ENCODE measurements at regions of chr1 and their contacts with region 1.

Region 1: GRCh38 chr1:33367485-33368405 is 46.8 kb upstream of the A3GALT2 start:
- DNase-seq: peak in 1 of 2 donors; percentile 92
- H3K4me3 ChIP-seq: peak overlapping the region in 1 of 2 donors; percentile 36
- H3K27ac ChIP-seq: peak overlapping the region; percentile 73 to 87
- H3K4me1 ChIP-seq: peaks cover 12 to 46% of the 10 kb centered on the region in 2 donors
- H3K27me3 ChIP-seq: no peaks in the 10 kb centered on the region
- CTCF ChIP-seq: peak; percentile 94 to 98 (median 96)

Region 2: GRCh38 chr1:33127001-33127791 is 240.5 kb before region 1 on chr1:
- intact Hi-C with region 1: loop called (anchors 5 kb)
- DNase-seq: peak; percentile 97 to 100
- H3K4me3 ChIP-seq: peak overlapping the region; percentile 63 to 79
- H3K27ac ChIP-seq: peak overlapping the region; percentile 86 to 88
- H3K4me1 ChIP-seq: peaks cover 7 to 15% of the 10 kb centered on the region in 2 donors
- H3K27me3 ChIP-seq: no peaks in the 10 kb centered on the region
- CTCF ChIP-seq: peak; percentile 85 to 89 (median 87)

Region 3: DNA sequence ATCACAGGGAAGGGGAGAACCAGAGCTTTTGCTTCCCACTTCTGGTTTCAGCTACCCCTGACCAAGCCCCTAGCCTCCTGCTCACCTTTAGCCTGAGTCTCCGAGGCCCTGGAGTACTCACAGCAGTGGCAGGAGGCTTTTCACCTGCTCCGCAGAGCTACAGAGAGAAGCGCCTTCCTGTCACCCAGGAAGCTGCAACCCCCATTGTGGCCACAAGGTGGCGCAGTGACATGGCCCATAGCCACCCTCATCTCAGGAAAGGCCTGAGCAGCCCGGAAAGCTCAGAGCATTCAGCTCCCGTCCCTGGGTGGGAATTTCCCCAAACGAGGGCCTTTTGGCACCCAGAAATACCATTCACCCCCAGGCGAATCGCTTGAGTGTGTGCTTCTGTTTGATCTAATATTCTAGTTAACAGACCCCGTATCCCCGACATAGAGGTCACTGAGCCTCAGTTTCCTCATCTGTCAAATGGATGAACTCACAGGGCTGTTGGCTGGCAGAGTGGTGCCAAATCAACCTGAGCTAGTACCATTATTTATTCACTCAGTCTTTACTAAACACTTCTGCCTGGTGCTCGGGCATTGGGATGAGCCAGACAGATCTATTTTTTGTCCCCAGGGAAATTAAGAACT is 72.2 kb before region 1 on chr1:
- intact Hi-C with region 1: loop called (anchors 1 kb)
- DNase-seq: peak; percentile 43 to 93
- H3K4me3 ChIP-seq: no peak overlapping the region
- H3K27ac ChIP-seq: peak overlapping the region; percentile 44 to 54
- H3K4me1 ChIP-seq: peaks cover 4 to 13% of the 10 kb centered on the region in 2 donors
- H3K27me3 ChIP-seq: no peaks in the 10 kb centered on the region
- CTCF ChIP-seq: peak; percentile 93 to 98 (median 98)

Region 4: DNA sequence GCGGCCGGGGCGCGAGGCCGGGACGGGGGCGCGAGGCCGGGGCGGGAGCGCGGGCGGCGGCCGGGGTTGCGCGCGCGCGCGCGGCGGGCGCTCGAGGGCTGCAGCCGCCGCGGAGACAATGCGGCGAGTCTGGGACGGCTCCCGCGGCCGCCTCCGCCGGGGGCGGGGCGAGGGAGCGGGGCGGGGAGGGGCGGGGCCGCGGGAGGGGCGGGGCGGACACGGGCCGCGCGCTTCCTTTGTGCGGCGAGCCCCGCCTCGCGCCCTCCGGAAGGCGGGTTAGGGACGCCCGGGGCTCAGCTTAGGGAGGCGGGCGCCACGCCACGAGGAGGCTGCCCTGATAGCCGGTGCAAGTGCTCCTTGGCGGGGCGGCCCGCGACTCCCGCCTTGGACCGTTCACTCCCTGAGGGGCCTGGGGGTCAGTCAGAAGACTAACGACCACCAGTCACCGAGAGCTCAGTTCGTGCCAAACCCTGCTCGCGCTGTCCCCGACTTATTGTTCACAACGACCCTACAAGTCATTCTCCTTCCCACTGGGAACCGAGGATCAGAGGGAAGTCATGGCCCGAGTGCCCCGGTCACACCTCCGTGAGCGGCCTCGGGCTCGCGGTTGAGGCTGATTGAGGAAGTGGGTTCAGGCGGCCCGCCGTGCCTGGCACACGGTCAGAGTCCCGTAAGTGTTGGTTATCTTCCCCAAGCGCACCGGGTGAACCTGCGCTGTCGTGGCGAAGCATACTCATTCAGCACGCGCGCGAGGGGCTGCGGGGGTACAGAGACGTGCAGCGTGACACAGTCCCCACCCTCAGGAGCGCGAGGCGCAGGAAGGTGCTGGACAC is 17.8 kb before region 1 on chr1:
- intact Hi-C with region 1: loop called (anchors 1 kb)
- DNase-seq: peak in 1 of 2 donors; percentile 93
- H3K4me3 ChIP-seq: peak overlapping the region; percentile 71 to 99
- H3K27ac ChIP-seq: peak overlapping the region; percentile 81 to 85
- H3K4me1 ChIP-seq: peaks cover 6 to 23% of the 10 kb centered on the region in 2 donors
- H3K27me3 ChIP-seq: no peaks in the 10 kb centered on the region
- CTCF ChIP-seq: no peak

Region 5: GRCh38 chr1:33402206-33402605 is 34.5 kb after region 1 on chr1:
- intact Hi-C with region 1: no loop called
- DNase-seq: no peak
- H3K4me3 ChIP-seq: no peak overlapping the region
- H3K27ac ChIP-seq: no peak overlapping the region
- H3K4me1 ChIP-seq: no peaks in the 10 kb centered on the region
- H3K27me3 ChIP-seq: no peaks in the 10 kb centered on the region
- CTCF ChIP-seq: no peak

Region 6: GRCh38 chr1:33430692-33431593 is 63.2 kb after region 1 on chr1 and contains the start of gene PHC2:
- intact Hi-C with region 1: loop called (anchors 1 kb)
- DNase-seq: peak; percentile 96 to 99
- H3K4me3 ChIP-seq: peak within 1 kb of the TSS; percentile 84 to 94
- H3K27ac ChIP-seq: peak within 1 kb of the TSS; percentile 45 to 51
- H3K4me1 ChIP-seq: no peaks in the 10 kb centered on the region
- H3K27me3 ChIP-seq: no peaks in the 10 kb centered on the region
- CTCF ChIP-seq: peak in 2 of 3 experiments; percentile 37 to 51
- total RNA-seq, gene PHC2: 222 TPM

Measured in ascending aorta (tissue), 2 donors.